Left cardiac atrium (tissue), 4 donors: ENCODE measurements at regions of chr13 and their contacts with region 1.

Region 1: GRCh38 chr13:28666897-28667488 is 8.1 kb downstream of the POMP start:
- DNase-seq: no peak
- ATAC-seq: no peak

Region 2: GRCh38 chr13:28704919-28705318 is 37.9 kb after region 1 on chr13:
- intact Hi-C with region 1: loop called in 1 of 2 experiments (anchors 5 kb)
- DNase-seq: no peak
- ATAC-seq: no peak

Region 3: DNA sequence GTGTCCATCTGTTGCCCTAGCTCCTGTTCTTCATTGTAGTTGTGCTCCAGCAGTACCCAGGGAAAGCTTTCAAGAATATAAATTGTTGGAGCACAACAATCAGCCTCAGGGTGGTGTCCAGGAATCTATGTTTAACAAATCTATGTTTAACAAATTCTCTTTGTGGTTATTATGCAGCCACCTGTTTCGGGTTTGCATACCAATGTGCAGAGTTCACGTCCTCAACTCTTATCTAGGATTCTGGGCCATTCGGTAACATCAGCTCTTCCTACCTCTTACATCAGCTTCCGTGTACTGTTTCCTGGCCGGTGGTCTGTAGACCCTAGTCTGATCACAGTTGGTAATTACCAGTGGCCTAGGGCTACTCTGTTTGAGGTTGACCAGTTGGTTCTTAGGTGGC is 170.1 kb after region 1 on chr13:
- intact Hi-C with region 1: no loop called
- DNase-seq: no peak
- ATAC-seq: no peak